H1 (cell line): ENCODE measurements at regions of chr2 and their contacts with region 1.

Region 1: DNA sequence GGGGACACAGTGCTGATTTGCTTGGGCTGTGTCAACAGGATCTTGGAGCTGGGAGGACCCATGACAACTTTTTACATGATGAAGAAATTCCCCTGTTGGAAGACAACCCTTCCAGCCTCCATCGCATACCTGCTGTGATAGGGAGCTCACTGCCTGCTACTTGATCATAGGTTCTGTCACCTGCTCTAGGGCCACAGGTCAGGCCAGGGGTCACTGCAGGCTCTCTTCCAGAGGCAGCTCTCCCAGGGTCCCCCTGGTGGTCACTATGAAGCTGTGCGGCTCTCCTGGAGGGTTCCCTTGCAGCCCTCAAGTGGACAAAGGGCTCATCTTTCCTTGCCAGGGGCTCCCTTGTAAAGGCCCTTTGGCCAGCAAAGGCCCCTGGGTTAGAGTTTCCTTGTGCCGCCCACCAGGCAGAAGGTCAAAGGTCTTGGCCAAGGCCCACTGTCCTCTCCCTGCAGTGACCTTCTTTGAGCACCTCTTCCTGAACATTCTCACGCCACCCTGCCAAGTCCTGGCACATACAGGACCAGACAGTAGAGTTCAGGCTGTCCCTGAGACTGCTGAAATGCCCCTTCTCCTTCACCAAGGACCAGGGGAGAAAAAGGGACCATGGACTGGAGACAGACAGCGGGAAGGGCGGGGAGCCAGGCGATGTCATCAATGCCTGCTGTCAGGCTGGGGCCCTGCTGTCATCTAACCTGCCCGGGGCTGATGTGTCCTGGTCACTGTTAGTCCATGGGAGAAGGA is 345.1 kb downstream of the DYSF start:
- DNase-seq: peak; percentile 39 to 83
- H3K4me3 ChIP-seq: no peak overlapping the region
- H3K27ac ChIP-seq: no peak overlapping the region
- H3K4me1 ChIP-seq: peaks cover 0 to 5% (median 0%) of the 10 kb centered on the region in 4 experiments; a peak in 1 of 7 replicates
- H3K27me3 ChIP-seq: no peaks in the 10 kb centered on the region
- CTCF ChIP-seq: peak; percentile 89 to 99 (median 92)
- EP300 ChIP-seq: no peak
- POLR2A ChIP-seq: no peak
- RAD21 ChIP-seq: peak; percentile 81 to 91

Region 2: DNA sequence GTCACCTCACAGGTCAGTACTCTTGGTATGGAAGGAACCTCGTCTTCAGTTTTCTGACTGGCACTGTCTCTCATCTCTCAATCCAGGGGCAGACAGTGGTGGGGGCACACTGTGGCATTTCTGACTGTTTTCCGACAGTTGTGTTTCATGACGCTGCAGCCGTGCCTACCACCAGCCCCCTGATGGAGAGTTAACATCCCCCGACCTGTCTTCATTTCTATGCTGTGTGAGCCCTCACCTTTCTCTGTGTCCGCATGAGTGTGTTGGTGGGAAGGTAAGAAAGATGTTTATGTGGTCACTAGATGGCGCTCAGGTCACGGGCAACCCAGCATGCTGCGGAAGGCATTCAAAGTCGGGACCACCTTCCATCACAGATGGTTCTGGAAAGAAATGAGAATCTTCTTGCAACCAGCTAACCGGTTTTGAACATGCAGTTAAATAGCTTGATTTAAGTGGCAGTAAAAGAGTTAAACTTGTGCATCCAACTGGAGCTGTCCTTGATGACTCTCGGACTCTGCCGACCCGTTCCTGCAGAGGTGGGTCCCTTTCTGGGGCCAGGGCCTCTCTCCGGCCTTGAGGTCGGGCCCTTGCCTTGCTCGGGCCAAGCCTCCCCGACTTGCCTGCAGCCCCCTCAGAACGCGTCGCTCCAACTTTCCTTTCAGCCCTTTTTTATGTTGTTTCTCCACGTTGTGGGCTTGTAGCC is 252.7 kb before region 1 on chr2:
- CTCF ChIA-PET with region 1: interaction called, 386 read pairs
- POLR2A ChIA-PET with region 1: no interaction called
- DNase-seq: peak; percentile 56 to 68
- H3K4me3 ChIP-seq: no peak overlapping the region
- H3K27ac ChIP-seq: no peak overlapping the region
- H3K4me1 ChIP-seq: no peaks in the 10 kb centered on the region
- H3K27me3 ChIP-seq: no peaks in the 10 kb centered on the region
- CTCF ChIP-seq: peak; percentile 78 to 91 (median 89)
- EP300 ChIP-seq: no peak
- POLR2A ChIP-seq: no peak
- RAD21 ChIP-seq: peak; percentile 96 to 97

Region 3: GRCh38 chr2:71671895-71672825 is 126.3 kb before region 1 on chr2:
- CTCF ChIA-PET with region 1: interaction called, 97 read pairs
- POLR2A ChIA-PET with region 1: no interaction called
- DNase-seq: peak in 1 of 2 experiments; percentile 60
- H3K4me3 ChIP-seq: no peak overlapping the region
- H3K27ac ChIP-seq: no peak overlapping the region
- H3K4me1 ChIP-seq: no peaks in the 10 kb centered on the region; a peak in 1 of 7 replicates
- H3K27me3 ChIP-seq: no peaks in the 10 kb centered on the region
- CTCF ChIP-seq: peak; percentile 60 to 72 (median 71)
- EP300 ChIP-seq: no peak
- POLR2A ChIP-seq: no peak
- RAD21 ChIP-seq: peak; percentile 76 to 83

Region 4: DNA sequence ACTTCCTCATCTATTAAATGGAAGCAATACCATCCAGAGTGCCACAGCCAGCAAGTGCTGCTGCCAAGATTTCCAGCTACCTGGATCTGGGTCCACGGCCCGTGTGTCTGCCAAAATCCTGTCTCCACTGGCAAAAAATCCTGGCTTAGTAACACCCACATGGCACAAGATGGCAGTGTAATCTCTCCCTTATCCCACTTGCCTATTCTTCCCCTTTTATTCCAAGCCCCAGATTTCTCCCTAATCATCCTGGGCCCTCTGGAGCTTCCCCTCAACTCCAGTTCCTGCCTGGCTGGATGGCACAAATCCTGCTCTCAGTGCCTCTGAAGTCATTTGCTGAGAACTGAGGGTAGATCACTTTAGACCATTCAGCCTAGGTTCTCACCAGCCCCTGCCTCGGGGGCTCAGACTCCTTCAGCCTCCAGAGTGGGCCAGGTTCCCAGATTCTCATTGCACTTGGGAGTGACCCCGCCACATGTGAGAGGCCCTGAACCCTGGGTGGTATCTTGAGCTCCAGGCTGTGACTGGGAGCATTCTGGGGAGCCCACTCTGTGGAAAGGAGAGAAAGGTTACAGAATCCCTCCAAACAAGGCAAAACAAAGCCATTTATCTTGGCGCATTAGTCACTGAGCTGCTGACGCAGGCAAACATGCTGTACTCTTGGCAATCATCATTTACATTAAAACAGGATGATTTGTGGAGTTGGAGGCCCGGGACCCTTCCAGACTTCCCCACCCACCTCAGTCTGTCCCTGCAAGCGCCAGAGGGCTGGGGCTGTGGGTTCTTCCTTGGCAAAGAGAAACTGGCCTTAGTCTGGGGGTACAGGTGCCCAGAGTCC is 19.3 kb before region 1 on chr2:
- CTCF ChIA-PET with region 1: interaction called, 107 read pairs
- POLR2A ChIA-PET with region 1: no interaction called
- DNase-seq: peak in 1 of 2 experiments; percentile 34
- H3K4me3 ChIP-seq: no peak overlapping the region
- H3K27ac ChIP-seq: no peak overlapping the region
- H3K4me1 ChIP-seq: no peaks in the 10 kb centered on the region
- H3K27me3 ChIP-seq: no peaks in the 10 kb centered on the region
- CTCF ChIP-seq: peak in 2 of 3 experiments; percentile 28 to 31; a peak in 1 of 4 replicates
- EP300 ChIP-seq: no peak
- POLR2A ChIP-seq: no peak
- RAD21 ChIP-seq: peak; percentile 39 to 53; a peak in 3 of 4 replicates

Region 5: DNA sequence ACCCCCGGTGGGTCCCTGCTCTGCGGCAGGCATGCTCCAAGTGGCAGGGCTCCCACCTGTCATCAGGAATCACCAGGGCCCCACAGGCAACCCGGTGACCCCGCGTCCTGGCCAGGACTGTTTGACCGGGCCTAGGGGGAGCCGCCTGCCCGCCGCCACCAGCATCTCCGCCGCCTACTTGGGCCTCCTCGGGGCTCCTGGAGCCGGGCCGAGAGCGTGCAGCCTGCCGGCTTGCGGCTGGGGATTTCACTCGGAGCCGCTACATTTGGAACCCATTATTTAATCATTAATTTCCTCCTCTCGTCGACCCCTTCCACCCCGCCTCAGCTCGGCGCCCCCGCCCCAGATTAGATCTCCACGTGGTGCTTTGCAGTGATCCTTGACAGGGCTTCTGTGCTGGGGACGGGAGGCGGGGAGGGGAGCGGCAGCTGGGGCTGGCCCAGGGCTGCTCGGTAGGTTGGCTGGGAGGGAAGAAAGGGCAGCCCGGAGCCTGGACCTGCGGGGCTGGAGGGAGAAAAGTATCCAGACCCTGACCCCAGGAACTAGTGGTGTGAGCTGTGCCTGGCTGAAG is 53.8 kb after region 1 on chr2:
- CTCF ChIA-PET with region 1: interaction called, 11 read pairs
- POLR2A ChIA-PET with region 1: no interaction called
- DNase-seq: peak in 1 of 2 experiments; percentile 52
- H3K4me3 ChIP-seq: no peak overlapping the region
- H3K27ac ChIP-seq: no peak overlapping the region
- H3K4me1 ChIP-seq: no peaks in the 10 kb centered on the region; a peak in 1 of 7 replicates
- H3K27me3 ChIP-seq: no peaks in the 10 kb centered on the region
- CTCF ChIP-seq: no peak
- EP300 ChIP-seq: no peak
- POLR2A ChIP-seq: no peak
- RAD21 ChIP-seq: no peak

Region 6: DNA sequence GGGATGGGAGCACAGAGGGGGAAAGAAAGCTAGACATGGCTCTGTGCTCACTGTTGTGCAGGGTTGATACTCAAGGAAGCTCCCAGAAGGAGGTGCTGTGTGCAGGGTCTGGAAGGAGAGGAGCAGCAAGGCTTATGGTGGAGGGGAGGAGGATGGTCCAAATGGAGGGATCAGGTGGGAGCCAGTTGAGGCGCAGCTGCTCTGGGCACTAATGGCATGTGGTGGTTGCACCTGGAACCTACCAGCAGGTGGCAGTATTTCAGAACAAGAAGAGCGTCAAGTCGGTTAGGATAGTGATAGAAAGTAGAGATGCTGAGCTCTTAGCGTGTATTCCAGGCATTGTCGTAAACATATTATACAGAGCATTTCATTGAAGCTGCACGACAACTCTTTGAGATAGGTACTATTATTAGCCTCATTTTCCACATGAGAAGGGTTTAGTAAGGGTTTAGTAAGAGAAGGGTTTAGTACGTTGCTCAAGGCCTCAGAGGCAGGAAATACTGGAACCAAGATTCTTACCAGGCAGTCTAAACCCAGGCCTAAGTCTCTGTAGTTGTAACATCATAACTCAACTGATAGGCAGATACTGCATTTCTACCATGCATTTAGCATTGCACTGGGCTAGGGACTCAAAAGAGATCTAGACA is 125.6 kb after region 1 on chr2:
- CTCF ChIA-PET with region 1: interaction called, 16 read pairs
- POLR2A ChIA-PET with region 1: no interaction called
- DNase-seq: peak; percentile 72 to 80
- H3K4me3 ChIP-seq: no peak overlapping the region
- H3K27ac ChIP-seq: no peak overlapping the region
- H3K4me1 ChIP-seq: no peaks in the 10 kb centered on the region
- H3K27me3 ChIP-seq: no peaks in the 10 kb centered on the region
- CTCF ChIP-seq: peak; percentile 76 to 97 (median 88)
- EP300 ChIP-seq: no peak
- POLR2A ChIP-seq: no peak
- RAD21 ChIP-seq: peak; percentile 85 to 88